ENCODE measurements at regions of chr7 and their contacts with region 1.

Region 1: DNA sequence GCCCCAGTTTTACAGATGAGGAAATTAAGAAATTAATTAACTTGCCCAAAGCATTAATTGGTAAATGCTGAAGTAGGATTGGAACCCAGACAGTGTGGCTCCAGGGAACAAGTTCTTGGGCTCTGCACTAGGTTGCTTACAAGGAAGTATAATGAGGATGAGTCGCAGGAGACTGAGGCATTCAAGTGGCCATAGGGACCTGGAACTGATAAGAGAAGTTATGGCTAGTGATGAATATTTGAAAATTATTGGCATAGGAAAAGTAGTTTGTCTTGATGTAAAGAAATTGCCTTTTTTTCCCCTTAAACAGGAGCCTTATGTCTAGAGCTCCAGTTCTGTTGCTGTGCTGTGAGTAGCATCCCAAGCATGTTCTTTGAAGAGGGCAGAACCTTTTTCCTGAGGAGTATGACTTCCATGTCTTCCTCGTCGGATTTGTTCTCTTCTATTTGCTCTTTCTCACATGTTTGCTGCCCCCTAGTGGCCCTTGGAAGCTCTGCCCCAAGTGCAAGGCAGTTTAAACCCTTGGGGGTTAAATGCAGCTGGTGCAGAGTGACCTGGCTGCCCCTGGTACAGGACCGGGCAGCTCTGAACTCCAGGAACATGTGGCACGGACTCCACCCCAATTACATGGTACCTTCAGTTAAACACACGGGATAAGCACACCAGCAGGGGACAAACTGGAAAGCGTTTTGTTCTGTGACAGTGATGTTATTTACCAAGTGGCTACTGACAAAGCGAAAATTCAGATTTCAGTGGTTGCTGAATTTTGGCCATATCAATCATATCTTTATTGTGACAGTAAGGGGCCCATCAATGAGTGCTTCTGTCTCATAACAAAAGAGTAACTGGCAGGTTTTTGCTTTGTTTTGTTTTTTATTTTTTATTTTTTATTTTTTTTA is 148.8 kb downstream of the HECW1 start:
- DNase-seq: peak; percentile 80
- H3K4me3 Mint-ChIP-seq: no peak overlapping the region
- H3K27ac Mint-ChIP-seq: no peak overlapping the region
- H3K4me1 Mint-ChIP-seq: no peaks in the 10 kb centered on the region
- H3K27me3 Mint-ChIP-seq: peaks cover 12% of the 10 kb centered on the region

Region 2: DNA sequence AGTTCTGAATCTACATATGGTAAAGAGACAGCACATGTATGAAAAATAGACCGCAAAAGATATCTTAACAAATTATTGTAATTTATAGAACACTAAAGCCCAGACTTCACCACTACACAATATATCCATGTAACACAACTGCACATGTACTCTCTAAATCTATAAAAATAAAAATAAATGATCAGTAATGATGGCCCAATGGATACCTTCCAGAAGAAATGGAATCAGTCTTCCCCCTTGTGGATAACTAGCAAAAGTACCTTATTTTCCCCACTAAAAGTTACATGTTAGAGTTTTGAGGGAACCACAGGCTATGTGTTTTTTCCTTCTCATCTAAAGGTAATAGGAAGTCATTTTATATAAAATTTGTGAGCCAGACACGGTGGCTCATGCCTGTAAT is 375.1 kb before region 1 on chr7:
- CTCF ChIA-PET with region 1: no interaction called
- intact Hi-C with region 1: loop called (anchors 5 kb)
- DNase-seq: no peak
- H3K4me3 Mint-ChIP-seq: no peak overlapping the region
- H3K27ac Mint-ChIP-seq: no peak overlapping the region
- H3K4me1 Mint-ChIP-seq: peaks cover 18% of the 10 kb centered on the region
- H3K27me3 Mint-ChIP-seq: no peaks in the 10 kb centered on the region

Region 3: GRCh38 chr7:43071604-43072003 is 189.6 kb before region 1 on chr7:
- CTCF ChIA-PET with region 1: no interaction called
- intact Hi-C with region 1: loop called (anchors 5 kb)
- DNase-seq: peak; percentile 47
- H3K4me3 Mint-ChIP-seq: no peak overlapping the region
- H3K27ac Mint-ChIP-seq: no peak overlapping the region
- H3K4me1 Mint-ChIP-seq: peaks cover 6% of the 10 kb centered on the region
- H3K27me3 Mint-ChIP-seq: peaks cover 26% of the 10 kb centered on the region

Region 4: GRCh38 chr7:43108255-43109011 is 152.8 kb before region 1 on chr7:
- CTCF ChIA-PET with region 1: no interaction called
- intact Hi-C with region 1: loop called (anchors 2 kb)
- DNase-seq: peak; percentile 82
- H3K4me3 Mint-ChIP-seq: no peak overlapping the region
- H3K27ac Mint-ChIP-seq: no peak overlapping the region
- H3K4me1 Mint-ChIP-seq: no peaks in the 10 kb centered on the region
- H3K27me3 Mint-ChIP-seq: peaks cover 51% of the 10 kb centered on the region

Region 5: GRCh38 chr7:43175570-43176200 is 85.5 kb before region 1 on chr7:
- CTCF ChIA-PET with region 1: interaction called, 3 read pairs
- intact Hi-C with region 1: loop called (anchors 5 kb)
- DNase-seq: no peak
- H3K4me3 Mint-ChIP-seq: no peak overlapping the region
- H3K27ac Mint-ChIP-seq: no peak overlapping the region
- H3K4me1 Mint-ChIP-seq: no peaks in the 10 kb centered on the region
- H3K27me3 Mint-ChIP-seq: peaks cover 5% of the 10 kb centered on the region

Region 6: DNA sequence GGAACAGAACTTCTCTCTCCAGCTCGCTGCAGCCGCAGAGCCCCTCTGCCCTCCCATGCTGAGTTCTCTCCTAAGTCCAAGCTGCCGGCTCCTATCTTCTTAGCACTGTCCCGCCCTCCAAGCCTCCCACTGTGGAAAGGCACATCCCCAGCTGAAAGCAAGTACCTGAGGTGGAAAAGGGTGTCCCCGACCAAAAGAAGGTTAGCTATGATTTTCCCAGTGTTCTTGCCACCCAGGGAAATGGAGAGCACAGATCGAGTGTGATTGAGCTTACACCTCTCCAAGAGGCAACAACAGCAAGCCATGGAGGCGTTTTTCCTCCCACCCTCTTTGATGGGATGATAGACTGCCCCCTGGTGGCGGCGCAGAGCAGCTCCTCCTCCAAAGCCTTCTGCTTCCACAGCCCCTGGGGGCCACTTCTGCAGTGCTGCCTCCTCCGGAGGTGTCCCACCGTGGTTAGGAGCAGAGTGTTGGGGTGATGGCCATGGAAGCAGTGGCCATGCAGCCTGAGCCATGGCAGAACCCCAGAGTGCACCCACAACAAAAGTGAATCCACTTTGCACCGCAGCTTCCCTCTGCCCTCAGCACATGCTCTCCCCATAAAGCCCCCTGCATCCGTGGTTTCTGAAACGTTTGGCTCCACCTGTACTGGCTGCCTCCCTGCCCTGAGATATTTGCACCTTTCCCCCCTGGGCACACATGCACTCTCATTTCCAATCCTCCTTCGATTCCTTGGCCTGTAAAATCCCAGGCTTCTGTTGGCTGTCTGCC is 178.6 kb after region 1 on chr7:
- CTCF ChIA-PET with region 1: interaction called, 6 read pairs
- intact Hi-C with region 1: loop called (anchors 5 kb)
- DNase-seq: peak; percentile 72
- H3K4me3 Mint-ChIP-seq: no peak overlapping the region
- H3K27ac Mint-ChIP-seq: no peak overlapping the region
- H3K4me1 Mint-ChIP-seq: peaks cover 5% of the 10 kb centered on the region
- H3K27me3 Mint-ChIP-seq: no peaks in the 10 kb centered on the region

Measured in activated naive CD4-positive, alpha-beta T cell treated with anti-CD3 and anti-CD28 coated beads for 36 hours (primary cell).